GM12878 (cell line): ENCODE measurements at regions of chr1 and their contacts with region 1.

Region 1: GRCh38 chr1:182677397-182678098 is 6.8 kb downstream of the RGS8 start:
- DNase-seq: peak; percentile 61
- ATAC-seq: peak; percentile 93
- H3K4me3 ChIP-seq: no peak overlapping the region
- H3K27ac ChIP-seq: no peak overlapping the region
- H3K4me1 ChIP-seq: peaks cover 36% of the 10 kb centered on the region; the same call in 1 of the 2 replicates
- H3K27me3 ChIP-seq: no peaks in the 10 kb centered on the region
- CTCF ChIP-seq: no peak
- EP300 ChIP-seq: peak; percentile 78 to 79; a peak in 3 of 4 replicates
- POLR2A ChIP-seq: no peak
- RAD21 ChIP-seq: no peak

Region 2: DNA sequence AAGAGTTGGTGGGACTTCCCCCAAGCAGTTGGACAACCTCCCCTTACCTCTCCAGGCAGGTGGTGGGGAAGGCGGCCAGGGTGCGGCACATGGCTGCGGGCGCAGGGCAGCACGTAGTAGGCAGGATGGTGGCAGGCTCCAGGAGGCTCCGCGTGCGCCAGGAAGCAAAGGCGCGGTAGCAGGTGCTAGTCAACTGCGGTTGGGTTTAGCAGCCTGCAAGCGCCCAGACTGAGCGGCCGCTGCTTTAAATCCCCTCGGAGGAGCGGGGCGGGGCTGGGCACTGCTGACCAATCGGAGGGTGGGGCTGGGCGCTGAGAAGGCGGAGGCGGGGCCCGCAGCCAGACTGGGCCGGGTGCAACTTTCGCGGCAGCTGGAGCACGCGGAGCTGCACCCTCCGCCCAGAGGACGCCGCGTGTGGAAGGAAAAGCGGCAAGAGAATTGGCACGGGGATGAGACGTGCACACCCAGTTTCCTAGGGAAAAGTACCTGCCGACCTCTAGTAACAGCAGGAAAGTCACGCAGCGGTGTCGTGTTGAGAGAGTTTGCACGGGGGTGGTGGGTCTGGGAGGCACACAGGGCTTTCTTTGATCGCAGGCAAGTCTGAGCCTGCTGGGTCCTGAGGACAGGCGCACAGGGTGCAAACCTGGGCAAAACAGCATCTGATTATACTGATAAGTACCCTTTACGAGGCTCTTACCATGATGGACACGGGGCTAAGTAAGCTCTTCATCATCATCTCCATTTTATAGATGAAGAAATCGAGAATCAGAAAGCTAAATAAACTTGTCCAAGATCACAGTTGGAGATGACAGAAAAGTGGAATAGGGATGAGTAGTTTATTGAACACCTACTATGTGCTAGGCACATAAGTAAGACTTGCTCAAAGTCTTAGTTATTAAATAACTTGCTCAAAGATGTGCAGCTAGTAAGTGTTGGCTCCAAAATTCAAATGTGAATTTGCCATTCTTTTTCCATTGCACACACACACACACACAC is 73.1 kb before region 1 on chr1 and contains the start of gene RGS16:
- CTCF ChIA-PET with region 1: interaction called, 121 read pairs
- POLR2A ChIA-PET with region 1: interaction called, 9 read pairs
- RAD21 ChIA-PET with region 1: interaction called, 65 read pairs
- SMC1A ChIA-PET with region 1: interaction called, 29 read pairs
- in situ Hi-C with region 1: no loop called
- intact Hi-C with region 1: loop called (anchors 2 kb)
- DNase-seq: peak; percentile 61
- ATAC-seq: peak; percentile 91
- H3K4me3 ChIP-seq: peak within 1 kb of the TSS; percentile 85
- H3K27ac ChIP-seq: peak within 1 kb of the TSS; percentile 54
- H3K4me1 ChIP-seq: peaks cover 25% of the 10 kb centered on the region
- H3K27me3 ChIP-seq: no peaks in the 10 kb centered on the region
- CTCF ChIP-seq: no peak
- EP300 ChIP-seq: 0 out of 4 replicates have a peak, but pooled peaks of 1 of the 2 experiments have one; percentile 16
- POLR2A ChIP-seq: peak; percentile 100
- RAD21 ChIP-seq: no peak
- polyA plus RNA-seq, gene RGS16: 16.4 to 18.5 TPM

Region 3: DNA sequence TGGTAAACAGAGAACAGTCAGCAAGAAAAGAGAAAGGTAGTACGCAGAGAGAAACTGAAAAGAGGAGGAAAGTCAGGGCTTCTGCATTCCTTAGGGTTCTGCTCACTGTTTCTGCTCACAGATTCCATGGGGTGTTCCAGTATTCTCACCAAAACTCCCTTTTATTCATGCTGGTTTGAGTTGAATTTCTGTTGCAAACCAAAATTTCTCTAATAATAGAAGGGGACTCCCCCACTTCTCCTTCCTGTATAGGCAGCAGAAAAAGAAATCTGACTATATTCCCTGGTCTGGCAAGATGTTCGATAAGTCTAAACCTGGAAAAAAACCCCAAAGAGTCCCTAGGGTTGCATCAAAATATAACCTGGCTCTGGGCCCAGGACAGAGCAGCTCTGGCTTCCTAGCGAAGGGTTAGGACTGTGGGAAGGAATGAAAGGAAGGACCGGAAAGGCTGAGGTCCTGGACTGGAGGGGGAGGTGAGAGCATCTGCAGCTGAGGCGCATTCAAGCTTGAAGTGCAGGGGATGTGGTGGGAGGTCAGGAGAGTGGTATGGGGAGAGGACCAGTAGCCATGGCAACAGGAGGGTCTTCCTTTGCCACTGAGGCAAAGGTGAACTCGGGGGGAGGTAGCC is 54.5 kb before region 1 on chr1:
- CTCF ChIA-PET with region 1: interaction called, 30 read pairs
- POLR2A ChIA-PET with region 1: interaction called, 22 read pairs
- RAD21 ChIA-PET with region 1: interaction called, 16 read pairs
- SMC1A ChIA-PET with region 1: interaction called, 37 read pairs
- in situ Hi-C with region 1: no loop called
- intact Hi-C with region 1: no loop called
- DNase-seq: no peak
- ATAC-seq: peak; percentile 79
- H3K4me3 ChIP-seq: peak overlapping the region; percentile 42
- H3K27ac ChIP-seq: peak overlapping the region; percentile 29
- H3K4me1 ChIP-seq: peaks cover 59% of the 10 kb centered on the region
- H3K27me3 ChIP-seq: no peaks in the 10 kb centered on the region
- CTCF ChIP-seq: no peak
- EP300 ChIP-seq: peak in 1 of 2 experiments; percentile 60; a peak in 3 of 4 replicates
- POLR2A ChIP-seq: no peak
- RAD21 ChIP-seq: peak; percentile 20

Region 4: GRCh38 chr1:182643706-182644105 is 33.8 kb before region 1 on chr1:
- CTCF ChIA-PET with region 1: interaction called, 12 read pairs
- POLR2A ChIA-PET with region 1: interaction called, 3 read pairs
- RAD21 ChIA-PET with region 1: interaction called, 24 read pairs
- SMC1A ChIA-PET with region 1: interaction called, 26 read pairs
- in situ Hi-C with region 1: no loop called
- intact Hi-C with region 1: no loop called
- DNase-seq: no peak
- ATAC-seq: peak; percentile 78
- H3K4me3 ChIP-seq: no peak overlapping the region
- H3K27ac ChIP-seq: peak overlapping the region; percentile 57
- H3K4me1 ChIP-seq: peaks cover 21% of the 10 kb centered on the region
- H3K27me3 ChIP-seq: no peaks in the 10 kb centered on the region
- CTCF ChIP-seq: no peak
- EP300 ChIP-seq: no peak
- POLR2A ChIP-seq: no peak
- RAD21 ChIP-seq: no peak

Region 5: GRCh38 chr1:182662121-182662890 is 15.2 kb before region 1 on chr1:
- CTCF ChIA-PET with region 1: interaction called, 23 read pairs
- POLR2A ChIA-PET with region 1: interaction called, 6 read pairs
- RAD21 ChIA-PET with region 1: interaction called, 10 read pairs
- SMC1A ChIA-PET with region 1: interaction called, 106 read pairs
- in situ Hi-C with region 1: no loop called
- intact Hi-C with region 1: no loop called
- DNase-seq: no peak
- ATAC-seq: no peak
- H3K4me3 ChIP-seq: no peak overlapping the region
- H3K27ac ChIP-seq: no peak overlapping the region
- H3K4me1 ChIP-seq: no peaks in the 10 kb centered on the region
- H3K27me3 ChIP-seq: no peaks in the 10 kb centered on the region
- CTCF ChIP-seq: no peak
- EP300 ChIP-seq: no peak
- POLR2A ChIP-seq: no peak
- RAD21 ChIP-seq: no peak

Region 6: GRCh38 chr1:182716740-182717720 is 39.5 kb after region 1 on chr1:
- CTCF ChIA-PET with region 1: interaction called, 4 read pairs
- POLR2A ChIA-PET with region 1: interaction called, 3 read pairs
- RAD21 ChIA-PET with region 1: interaction called, 5 read pairs
- SMC1A ChIA-PET with region 1: interaction called, 10 read pairs
- in situ Hi-C with region 1: no loop called
- intact Hi-C with region 1: no loop called
- DNase-seq: peak; percentile 16
- ATAC-seq: peak; percentile 62
- H3K4me3 ChIP-seq: no peak overlapping the region
- H3K27ac ChIP-seq: no peak overlapping the region
- H3K4me1 ChIP-seq: peaks cover 3% of the 10 kb centered on the region
- H3K27me3 ChIP-seq: no peaks in the 10 kb centered on the region
- CTCF ChIP-seq: no peak
- EP300 ChIP-seq: no peak
- POLR2A ChIP-seq: no peak
- RAD21 ChIP-seq: no peak

Region 7: GRCh38 chr1:182952677-182953431 is 275.3 kb after region 1 on chr1 and contains the start of gene SHCBP1L:
- CTCF ChIA-PET with region 1: no interaction called
- POLR2A ChIA-PET with region 1: no interaction called
- RAD21 ChIA-PET with region 1: no interaction called
- SMC1A ChIA-PET with region 1: no interaction called
- in situ Hi-C with region 1: no loop called
- intact Hi-C with region 1: no loop called
- DNase-seq: no peak
- ATAC-seq: no peak
- H3K4me3 ChIP-seq: no peak within 1 kb of the TSS
- H3K27ac ChIP-seq: no peak within 1 kb of the TSS
- H3K4me1 ChIP-seq: no peaks in the 10 kb centered on the region
- H3K27me3 ChIP-seq: no peaks in the 10 kb centered on the region; a peak in 1 of 4 replicates
- CTCF ChIP-seq: no peak
- EP300 ChIP-seq: no peak
- POLR2A ChIP-seq: no peak
- RAD21 ChIP-seq: no peak
- polyA plus RNA-seq, gene SHCBP1L: not detected